ENCODE measurements at regions of chr15 and their contacts with region 1.

Region 1: DNA sequence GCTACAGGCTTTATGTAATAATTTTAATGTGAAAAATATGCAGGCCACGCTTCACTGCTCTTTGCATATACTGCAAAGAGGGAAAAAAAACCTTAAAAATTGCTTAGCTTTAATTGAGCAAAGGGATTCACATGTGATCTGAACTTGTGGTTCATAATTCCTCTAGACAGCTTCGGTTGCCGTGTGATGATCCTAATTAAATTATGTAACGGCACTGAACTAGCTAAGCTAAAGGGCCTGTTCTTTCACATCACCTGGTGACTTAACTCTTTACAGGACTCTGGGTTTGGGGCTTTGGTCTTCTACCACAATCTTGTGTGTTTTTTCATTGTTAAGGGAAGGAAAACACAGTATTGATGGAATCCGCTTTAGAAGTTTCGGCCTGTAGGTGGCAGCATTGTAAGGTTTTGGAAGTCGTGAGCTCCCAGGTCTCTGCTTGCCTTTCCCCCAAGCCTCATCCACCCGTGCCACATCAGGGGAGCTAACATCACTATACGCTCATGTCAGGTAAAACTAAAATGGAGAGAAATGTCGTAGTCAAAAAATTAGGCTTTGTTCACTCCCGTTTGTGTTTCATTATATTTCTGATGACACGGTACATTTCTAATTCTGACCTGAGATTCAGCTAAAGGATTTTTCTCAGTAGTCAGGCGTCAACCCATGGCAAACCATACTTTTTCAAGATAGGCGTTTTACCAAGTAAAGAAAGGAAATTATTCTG is 205.6 kb upstream of the DPH6 start:
- DNase-seq: peak; percentile 41
- H3K4me3 Mint-ChIP-seq: peak overlapping the region; percentile 28
- H3K27ac Mint-ChIP-seq: no peak overlapping the region
- H3K4me1 Mint-ChIP-seq: no peaks in the 10 kb centered on the region
- H3K27me3 Mint-ChIP-seq: no peaks in the 10 kb centered on the region
- CTCF ChIP-seq: peak; percentile 33

Region 2: DNA sequence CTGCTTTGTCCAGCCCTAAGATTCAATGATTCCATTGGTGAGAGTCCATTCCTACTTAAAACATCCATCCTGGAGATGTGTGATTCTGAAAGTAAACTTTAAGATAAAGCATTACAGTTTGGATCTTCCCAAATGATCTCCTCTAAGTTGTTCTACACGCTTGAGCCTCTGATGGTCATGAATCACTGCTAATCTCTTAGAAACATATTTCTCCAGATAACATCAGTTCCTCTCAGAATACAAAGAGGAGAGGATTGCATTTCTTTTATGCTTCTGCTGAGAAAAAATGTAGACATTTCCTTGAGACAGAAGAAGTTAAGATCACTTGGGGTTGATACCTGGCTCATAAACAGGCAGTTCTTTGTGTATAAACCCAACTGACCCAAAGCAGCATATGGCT is 75.6 kb after region 1 on chr15:
- CTCF ChIA-PET with region 1: interaction called, 18 read pairs
- intact Hi-C with region 1: no loop called
- DNase-seq: no peak
- H3K4me3 Mint-ChIP-seq: no peak overlapping the region
- H3K27ac Mint-ChIP-seq: no peak overlapping the region
- H3K4me1 Mint-ChIP-seq: no peaks in the 10 kb centered on the region
- H3K27me3 Mint-ChIP-seq: no peaks in the 10 kb centered on the region
- CTCF ChIP-seq: no peak

Region 3: GRCh38 chr15:36109943-36110658 is 358.5 kb after region 1 on chr15:
- CTCF ChIA-PET with region 1: no interaction called
- intact Hi-C with region 1: no loop called
- DNase-seq: no peak
- H3K4me3 Mint-ChIP-seq: no peak overlapping the region
- H3K27ac Mint-ChIP-seq: no peak overlapping the region
- H3K4me1 Mint-ChIP-seq: no peaks in the 10 kb centered on the region
- H3K27me3 Mint-ChIP-seq: no peaks in the 10 kb centered on the region
- CTCF ChIP-seq: no peak